Upper lobe of right lung (tissue), 1 donor: ENCODE measurements at regions of chr12 and their contacts with region 1.

Region 1: DNA sequence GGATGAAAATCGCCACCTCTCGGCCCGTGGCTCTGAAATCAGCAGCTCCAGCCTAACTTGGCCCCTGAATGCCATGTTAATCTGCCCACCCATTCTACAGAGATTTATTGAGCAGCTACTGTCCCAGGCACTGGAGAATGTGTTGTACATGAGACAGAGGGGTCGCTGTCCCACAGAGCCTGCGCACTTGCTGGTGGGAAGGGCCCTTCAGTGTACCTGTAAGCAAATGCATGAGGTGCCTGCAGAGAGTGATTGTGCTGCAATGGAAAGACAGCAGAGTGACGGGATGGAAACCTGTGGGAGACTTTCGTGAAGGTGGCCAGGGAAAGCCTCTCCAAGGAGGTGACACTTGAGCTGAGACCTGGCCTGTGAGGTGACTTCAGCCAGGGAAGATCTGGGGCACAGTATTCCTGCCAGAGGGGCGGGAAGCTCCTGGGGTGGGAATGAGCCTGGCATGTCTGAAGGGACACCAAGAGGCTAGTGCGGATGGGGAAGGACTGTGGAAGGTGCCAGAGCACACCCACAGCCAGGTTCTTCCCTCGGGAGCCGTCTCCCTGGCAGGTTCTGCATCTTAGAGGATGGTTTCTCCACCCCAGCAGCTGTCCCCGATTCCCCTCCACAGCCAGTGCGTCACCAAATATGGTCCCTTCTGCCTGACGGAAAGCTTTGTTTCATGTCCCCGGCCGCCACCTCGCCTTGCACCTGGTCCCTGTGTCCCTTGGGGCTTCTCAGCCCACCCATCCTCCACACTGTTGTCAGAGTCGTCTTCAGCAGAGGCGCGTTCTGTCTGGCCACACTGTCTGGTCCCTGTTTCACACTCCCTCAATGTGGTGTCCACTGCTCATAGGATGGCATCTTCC is 8.7 kb downstream of the SMIM41 start:
- DNase-seq: peak; percentile 48
- ATAC-seq: no peak
- H3K4me3 ChIP-seq: no peak overlapping the region
- H3K27ac ChIP-seq: no peak overlapping the region
- H3K4me1 ChIP-seq: peaks cover 5% of the 10 kb centered on the region
- H3K27me3 ChIP-seq: no peaks in the 10 kb centered on the region
- CTCF ChIP-seq: no peak

Region 2: GRCh38 chr12:51687614-51688013 is 400.6 kb before region 1 on chr12:
- intact Hi-C with region 1: no loop called
- DNase-seq: no peak
- ATAC-seq: no peak
- H3K4me3 ChIP-seq: no peak overlapping the region
- H3K27ac ChIP-seq: no peak overlapping the region
- H3K4me1 ChIP-seq: peaks cover 9% of the 10 kb centered on the region
- H3K27me3 ChIP-seq: peaks cover 4% of the 10 kb centered on the region
- CTCF ChIP-seq: no peak

Region 3: DNA sequence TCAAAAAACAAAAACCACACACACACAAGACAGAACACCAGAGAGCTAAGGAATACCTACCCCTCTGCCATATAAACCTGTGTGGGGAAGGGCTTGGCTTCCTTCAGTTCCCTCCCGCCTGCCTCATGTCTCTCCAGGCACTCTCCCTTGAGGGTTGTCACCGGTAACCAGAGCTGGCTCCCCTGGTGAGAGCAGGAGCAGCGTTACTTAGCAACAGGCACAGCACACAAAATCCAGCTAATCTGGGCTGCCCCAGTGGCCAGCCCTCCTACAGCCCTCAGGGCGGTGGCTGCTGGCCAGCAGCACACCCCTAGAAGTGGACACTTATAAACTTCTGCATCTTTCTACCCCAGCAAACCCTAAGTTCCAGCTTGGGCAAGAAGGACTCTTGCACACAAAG is 58.5 kb before region 1 on chr12:
- intact Hi-C with region 1: loop called (anchors 5 kb)
- DNase-seq: no peak
- ATAC-seq: no peak
- H3K4me3 ChIP-seq: no peak overlapping the region
- H3K27ac ChIP-seq: no peak overlapping the region
- H3K4me1 ChIP-seq: peaks cover 28% of the 10 kb centered on the region
- H3K27me3 ChIP-seq: no peaks in the 10 kb centered on the region
- CTCF ChIP-seq: no peak

Region 4: DNA sequence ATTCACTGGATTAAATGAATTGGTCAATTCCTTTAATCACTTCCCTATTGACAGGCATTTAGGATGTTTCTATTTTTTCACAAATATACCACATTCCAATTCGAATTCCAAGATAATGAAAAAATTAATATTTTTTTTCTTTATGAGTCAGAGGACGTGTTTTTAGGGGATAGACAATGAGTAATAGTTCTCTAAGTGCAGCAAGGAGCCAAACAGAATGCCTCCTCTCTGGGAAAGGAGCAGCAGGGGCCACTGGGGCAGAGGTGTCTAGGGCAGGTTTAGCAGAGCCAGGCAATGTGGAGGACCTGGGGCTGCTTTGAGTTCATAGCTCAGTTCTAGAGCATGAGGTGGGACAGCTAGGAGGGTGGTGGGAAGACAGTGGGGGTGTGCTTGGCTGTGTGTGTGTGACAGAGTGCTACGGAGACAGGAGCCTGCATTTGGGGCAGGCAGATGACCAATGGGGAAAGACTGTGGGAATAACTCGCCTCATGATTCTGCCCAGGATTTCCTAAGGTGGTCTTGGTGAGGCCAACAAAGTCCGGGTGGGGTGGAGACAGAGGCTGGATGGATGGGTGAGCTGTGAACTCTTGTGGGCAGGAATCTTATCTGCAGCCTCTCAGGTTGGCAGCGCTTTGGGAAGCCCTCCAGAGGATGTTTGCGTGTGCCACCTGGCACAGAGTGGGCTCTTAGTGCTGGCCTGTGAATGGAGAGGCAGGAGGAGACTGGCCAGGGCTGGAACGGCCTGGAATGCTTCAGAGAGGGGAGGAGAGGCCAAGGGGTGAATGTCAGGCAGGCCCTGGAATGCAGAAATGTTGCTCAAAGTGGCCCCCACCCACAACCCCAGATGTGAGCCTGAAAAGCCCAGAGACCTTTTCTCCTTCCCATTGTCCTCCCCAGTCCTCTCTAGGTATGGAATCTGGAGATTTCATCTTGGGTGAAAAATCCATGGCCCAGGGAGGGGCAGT is 142.4 kb after region 1 on chr12:
- intact Hi-C with region 1: no loop called
- DNase-seq: peak; percentile 84
- ATAC-seq: peak; percentile 69
- H3K4me3 ChIP-seq: no peak overlapping the region
- H3K27ac ChIP-seq: peak overlapping the region; percentile 80
- H3K4me1 ChIP-seq: peaks cover 8% of the 10 kb centered on the region
- H3K27me3 ChIP-seq: peaks cover 10% of the 10 kb centered on the region
- CTCF ChIP-seq: no peak